ENCODE measurements at regions of chr20 and their contacts with region 1.

Region 1: GRCh38 chr20:35463455-35464300 is 8.3 kb downstream of the CEP250 start:
- DNase-seq: peak in 1 of 2 experiments; percentile 81
- H3K4me3 ChIP-seq: no peak overlapping the region
- H3K27ac ChIP-seq: no peak overlapping the region
- H3K4me1 ChIP-seq: no peaks in the 10 kb centered on the region
- H3K27me3 ChIP-seq: no peaks in the 10 kb centered on the region
- CTCF ChIP-seq: peak in 2 of 3 experiments; percentile 64 to 89; a peak in 3 of 4 replicates
- EP300 ChIP-seq: no peak
- POLR2A ChIP-seq: no peak
- RAD21 ChIP-seq: peak; percentile 66 to 70

Region 2: GRCh38 chr20:35496481-35496880 is 32.8 kb after region 1 on chr20:
- CTCF ChIA-PET with region 1: interaction called, 12 read pairs
- POLR2A ChIA-PET with region 1: no interaction called
- DNase-seq: no peak
- H3K4me3 ChIP-seq: no peak overlapping the region
- H3K27ac ChIP-seq: no peak overlapping the region
- H3K4me1 ChIP-seq: no peaks in the 10 kb centered on the region
- H3K27me3 ChIP-seq: no peaks in the 10 kb centered on the region
- CTCF ChIP-seq: no peak
- EP300 ChIP-seq: no peak
- POLR2A ChIP-seq: no peak
- RAD21 ChIP-seq: no peak

Region 3: DNA sequence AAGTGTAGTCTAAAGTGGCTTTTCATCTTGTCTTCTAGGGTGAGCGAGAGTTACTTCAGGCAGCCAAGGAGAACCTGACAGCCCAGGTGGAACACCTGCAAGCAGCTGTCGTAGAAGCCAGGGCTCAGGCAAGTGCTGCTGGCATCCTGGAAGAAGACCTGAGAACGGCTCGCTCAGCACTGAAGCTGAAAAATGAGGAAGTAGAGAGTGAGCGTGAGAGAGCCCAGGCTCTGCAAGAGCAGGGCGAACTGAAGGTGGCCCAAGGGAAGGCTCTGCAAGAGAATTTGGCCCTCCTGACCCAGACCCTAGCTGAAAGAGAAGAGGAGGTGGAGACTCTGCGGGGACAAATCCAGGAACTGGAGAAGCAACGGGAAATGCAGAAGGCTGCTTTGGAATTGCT is 38.7 kb after region 1 on chr20:
- CTCF ChIA-PET with region 1: interaction called, 12 read pairs
- POLR2A ChIA-PET with region 1: no interaction called
- DNase-seq: no peak
- H3K4me3 ChIP-seq: no peak overlapping the region
- H3K27ac ChIP-seq: no peak overlapping the region
- H3K4me1 ChIP-seq: no peaks in the 10 kb centered on the region
- H3K27me3 ChIP-seq: no peaks in the 10 kb centered on the region
- CTCF ChIP-seq: no peak
- EP300 ChIP-seq: no peak
- POLR2A ChIP-seq: no peak
- RAD21 ChIP-seq: no peak